Caco-2 (cell line): ENCODE measurements at regions of chr4 and their contacts with region 1.

Region 1: DNA sequence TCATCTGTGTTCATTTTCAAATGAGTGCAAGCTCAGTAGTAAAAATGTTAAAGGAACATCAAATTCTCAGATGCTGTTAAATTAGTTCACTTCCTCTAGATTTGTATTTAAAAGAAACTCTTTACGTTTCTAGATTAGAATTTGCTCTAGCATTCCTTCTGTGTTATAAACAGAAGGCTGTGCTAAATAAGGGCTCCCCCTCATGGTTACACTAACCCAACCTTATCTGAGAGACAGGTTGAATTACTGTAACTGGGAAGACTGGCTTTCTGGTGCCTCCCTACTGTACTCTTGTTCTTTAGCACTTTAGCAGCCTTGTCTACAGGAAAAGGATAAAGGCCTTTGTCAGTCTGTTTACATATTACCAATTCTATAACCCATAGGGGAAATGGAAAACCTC is 56.8 kb downstream of the RXFP1 start:
- DNase-seq: peak in 1 of 2 experiments; percentile 6
- H3K4me3 ChIP-seq: no peak overlapping the region
- H3K4me3 Mint-ChIP-seq: no peak overlapping the region
- H3K27ac Mint-ChIP-seq: no peak overlapping the region
- H3K4me1 ChIP-seq: no peaks in the 10 kb centered on the region
- H3K4me1 Mint-ChIP-seq: no peaks in the 10 kb centered on the region
- H3K27me3 ChIP-seq: no peaks in the 10 kb centered on the region
- H3K27me3 Mint-ChIP-seq: no peaks in the 10 kb centered on the region
- CTCF ChIP-seq: peak in 1 of 2 experiments; percentile 47

Region 2: DNA sequence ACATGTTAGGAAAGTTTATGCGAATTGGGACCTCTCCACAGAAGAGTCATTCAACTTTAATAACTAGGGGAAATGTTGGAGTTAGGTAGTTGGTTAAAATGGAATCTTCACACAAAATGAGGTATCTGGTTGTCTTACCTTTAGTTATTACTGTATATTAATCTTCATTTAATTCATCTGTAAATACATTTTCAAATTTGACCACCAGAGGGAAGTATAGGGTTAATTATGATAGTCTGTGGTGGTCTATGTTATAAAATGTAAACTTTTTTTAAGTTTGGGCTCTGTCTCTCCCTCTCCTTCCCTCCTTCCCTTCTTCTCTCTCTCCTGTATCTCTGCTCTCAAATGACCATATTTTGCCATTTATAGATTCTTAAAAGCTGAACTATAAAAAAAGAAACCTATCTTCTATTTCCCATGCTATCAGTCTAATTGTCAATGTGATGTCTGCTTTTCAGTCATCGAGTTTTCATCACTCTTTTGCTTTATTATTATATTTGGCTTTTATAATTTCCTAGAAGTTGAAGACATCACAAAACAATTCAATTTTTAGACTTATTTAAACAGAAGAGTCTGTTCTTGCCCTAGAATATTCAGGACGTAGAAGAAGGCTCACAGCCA is 318.4 kb before region 1 on chr4:
- CTCF ChIA-PET with region 1: no interaction called
- POLR2A ChIA-PET with region 1: no interaction called
- intact Hi-C with region 1: loop called (anchors 2 kb)
- DNase-seq: peak in 1 of 2 experiments; percentile 10
- H3K4me3 ChIP-seq: no peak overlapping the region
- H3K4me3 Mint-ChIP-seq: no peak overlapping the region
- H3K27ac Mint-ChIP-seq: no peak overlapping the region
- H3K4me1 ChIP-seq: no peaks in the 10 kb centered on the region
- H3K4me1 Mint-ChIP-seq: no peaks in the 10 kb centered on the region
- H3K27me3 ChIP-seq: no peaks in the 10 kb centered on the region
- H3K27me3 Mint-ChIP-seq: no peaks in the 10 kb centered on the region
- CTCF ChIP-seq: peak in 1 of 2 experiments; percentile 48

Region 3: DNA sequence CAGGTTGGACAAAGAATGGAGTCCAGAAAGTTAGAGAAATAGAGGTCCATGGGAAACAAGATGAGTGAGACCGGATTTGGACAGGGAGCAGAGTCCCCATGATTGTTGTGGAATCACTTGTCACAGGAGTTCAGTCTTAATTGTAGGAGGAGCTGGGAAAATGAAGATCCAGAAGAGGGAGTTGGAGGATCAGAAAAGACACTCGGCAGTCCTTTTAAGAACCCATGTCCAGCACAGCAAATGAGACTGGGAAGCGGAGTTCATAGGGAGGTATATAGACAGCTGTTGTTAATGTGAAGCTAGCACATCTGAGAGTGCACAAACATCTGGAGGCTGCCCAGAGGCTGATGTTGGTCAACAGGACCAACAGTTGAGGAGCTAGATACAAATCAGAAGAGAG is 168.2 kb before region 1 on chr4:
- CTCF ChIA-PET with region 1: no interaction called
- POLR2A ChIA-PET with region 1: no interaction called
- intact Hi-C with region 1: loop called (anchors 1 kb)
- DNase-seq: peak in 1 of 2 experiments; percentile 2
- H3K4me3 ChIP-seq: no peak overlapping the region
- H3K4me3 Mint-ChIP-seq: no peak overlapping the region
- H3K27ac Mint-ChIP-seq: no peak overlapping the region
- H3K4me1 ChIP-seq: no peaks in the 10 kb centered on the region
- H3K4me1 Mint-ChIP-seq: no peaks in the 10 kb centered on the region
- H3K27me3 ChIP-seq: no peaks in the 10 kb centered on the region
- H3K27me3 Mint-ChIP-seq: peaks cover 7% of the 10 kb centered on the region
- CTCF ChIP-seq: peak in 1 of 2 experiments; percentile 11

Region 4: GRCh38 chr4:158590306-158590705 is 11.8 kb after region 1 on chr4:
- CTCF ChIA-PET with region 1: no interaction called
- POLR2A ChIA-PET with region 1: no interaction called
- intact Hi-C with region 1: no loop called
- DNase-seq: no peak
- H3K4me3 ChIP-seq: no peak overlapping the region
- H3K4me3 Mint-ChIP-seq: no peak overlapping the region
- H3K27ac Mint-ChIP-seq: no peak overlapping the region
- H3K4me1 ChIP-seq: no peaks in the 10 kb centered on the region
- H3K4me1 Mint-ChIP-seq: no peaks in the 10 kb centered on the region
- H3K27me3 ChIP-seq: no peaks in the 10 kb centered on the region
- H3K27me3 Mint-ChIP-seq: peaks cover 3% of the 10 kb centered on the region
- CTCF ChIP-seq: no peak